ENCODE measurements at regions of chr5 and their contacts with region 1.

Region 1: GRCh38 chr5:32047056-32047455 is 127.1 kb downstream of the GOLPH3 start:
- DNase-seq: no peak
- ATAC-seq: no peak

Region 2: GRCh38 chr5:31854181-31855133 is 192.6 kb before region 1 on chr5:
- intact Hi-C with region 1: no loop called
- DNase-seq: peak; percentile 54
- ATAC-seq: peak; percentile 81 to 93

Region 3: GRCh38 chr5:32027717-32028321 is 19.2 kb before region 1 on chr5:
- intact Hi-C with region 1: loop called in 1 of 2 experiments (anchors 2 kb)
- DNase-seq: peak; percentile 71
- ATAC-seq: peak; percentile 92 to 94

Region 4: GRCh38 chr5:32572778-32573480 is 525.9 kb after region 1 on chr5:
- intact Hi-C with region 1: no loop called
- DNase-seq: no peak
- ATAC-seq: no peak